A673 (cell line): ENCODE measurements at regions of chr6 and their contacts with region 1.

Region 1: GRCh38 chr6:163413345-163414116 is 987 bp upstream of the QKI start:
- DNase-seq: peak; percentile 91
- H3K4me3 ChIP-seq: peak overlapping the region; percentile 63
- H3K27ac ChIP-seq: peak overlapping the region; percentile 90
- H3K4me1 ChIP-seq: peaks cover 22% of the 10 kb centered on the region
- H3K27me3 ChIP-seq: no peaks in the 10 kb centered on the region
- CTCF ChIP-seq: no peak

Region 2: DNA sequence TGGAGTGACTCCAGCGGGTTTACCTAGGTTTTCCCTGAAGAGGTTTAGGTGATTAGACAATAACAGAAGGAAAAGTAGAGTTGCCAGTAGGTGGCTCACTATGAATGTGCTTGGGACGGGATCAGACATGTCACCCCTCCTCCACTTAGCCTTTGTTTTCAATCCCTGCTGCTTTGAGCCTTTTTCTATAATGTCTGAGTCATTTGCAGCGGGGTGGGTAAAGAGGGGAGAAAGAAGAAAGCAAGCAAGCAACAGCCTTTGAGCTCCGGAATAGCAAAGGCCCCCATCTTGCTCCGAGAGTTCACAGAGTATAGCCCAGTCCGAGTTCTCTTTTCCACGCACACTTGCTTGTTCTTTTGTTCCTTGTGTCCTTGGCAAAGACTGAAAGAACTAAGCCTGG is 556.6 kb before region 1 on chr6:
- CTCF ChIA-PET with region 1: no interaction called
- POLR2A ChIA-PET with region 1: no interaction called
- intact Hi-C with region 1: loop called (anchors 2 kb)
- DNase-seq: peak; percentile 87
- H3K4me3 ChIP-seq: peak overlapping the region; percentile 35
- H3K27ac ChIP-seq: peak overlapping the region; percentile 66
- H3K4me1 ChIP-seq: peaks cover 9% of the 10 kb centered on the region
- H3K27me3 ChIP-seq: no peaks in the 10 kb centered on the region
- CTCF ChIP-seq: peak; percentile 61

Region 3: GRCh38 chr6:163180874-163181541 is 232.5 kb before region 1 on chr6:
- CTCF ChIA-PET with region 1: no interaction called
- POLR2A ChIA-PET with region 1: no interaction called
- intact Hi-C with region 1: loop called (anchors 10 kb)
- DNase-seq: no peak
- H3K4me3 ChIP-seq: no peak overlapping the region
- H3K27ac ChIP-seq: no peak overlapping the region
- H3K4me1 ChIP-seq: no peaks in the 10 kb centered on the region
- H3K27me3 ChIP-seq: no peaks in the 10 kb centered on the region
- CTCF ChIP-seq: no peak

Region 4: GRCh38 chr6:164097557-164098398 is 684.2 kb after region 1 on chr6:
- CTCF ChIA-PET with region 1: no interaction called
- POLR2A ChIA-PET with region 1: no interaction called
- intact Hi-C with region 1: loop called (anchors 5 kb)
- DNase-seq: peak; percentile 69
- H3K4me3 ChIP-seq: no peak overlapping the region
- H3K27ac ChIP-seq: peak overlapping the region; percentile 58
- H3K4me1 ChIP-seq: peaks cover 17% of the 10 kb centered on the region
- H3K27me3 ChIP-seq: no peaks in the 10 kb centered on the region
- CTCF ChIP-seq: no peak